Astrocyte of the cerebellum (primary cell): ENCODE measurements at regions of chr7 and their contacts with region 1.

Region 1: DNA sequence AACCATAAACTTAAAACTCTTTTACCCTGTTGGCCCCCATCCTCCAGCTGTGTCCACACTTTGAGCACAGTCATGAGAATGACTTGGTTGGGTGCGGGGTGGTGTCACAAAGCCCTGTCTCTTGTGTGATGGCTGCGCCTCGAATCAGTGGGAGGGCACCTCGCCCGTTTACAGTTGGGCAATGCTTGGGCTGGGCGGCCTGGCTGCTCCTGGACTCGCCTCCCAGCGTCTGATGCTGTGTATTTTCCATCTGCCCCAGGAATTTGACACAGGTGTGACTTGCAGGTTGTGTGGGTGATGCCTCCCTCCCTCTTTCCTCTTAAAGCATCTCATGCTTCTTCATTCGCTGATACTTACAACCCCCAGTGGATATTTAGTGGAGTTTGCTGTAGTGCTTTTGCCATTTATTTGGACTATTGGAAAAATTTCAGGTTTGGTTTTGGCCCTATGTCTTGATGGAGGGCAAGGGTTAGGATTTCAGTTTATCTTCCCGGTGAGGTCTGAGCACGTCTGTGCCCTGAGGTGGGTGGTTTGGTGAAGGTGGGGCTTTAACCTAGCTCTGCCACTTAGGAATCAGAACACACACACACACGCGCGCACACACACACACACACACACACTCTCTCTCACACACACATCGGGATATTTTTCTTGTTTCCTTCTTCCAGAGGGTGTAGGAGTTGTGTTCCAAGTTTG is 33.9 kb downstream of the CHST12 start:
- DNase-seq: no peak
- H3K4me3 ChIP-seq: no peak overlapping the region
- CTCF ChIP-seq: no peak

Region 2: GRCh38 chr7:2360796-2361195 is 76.5 kb before region 1 on chr7:
- in situ Hi-C with region 1: loop called (anchors 5 kb)
- DNase-seq: no peak
- H3K4me3 ChIP-seq: no peak overlapping the region
- CTCF ChIP-seq: no peak